Activated B cell treated with CpG ODN at 0.5 μM for 24 hours (primary cell): ENCODE measurements at regions of chr2 and their contacts with region 1.

Region 1: DNA sequence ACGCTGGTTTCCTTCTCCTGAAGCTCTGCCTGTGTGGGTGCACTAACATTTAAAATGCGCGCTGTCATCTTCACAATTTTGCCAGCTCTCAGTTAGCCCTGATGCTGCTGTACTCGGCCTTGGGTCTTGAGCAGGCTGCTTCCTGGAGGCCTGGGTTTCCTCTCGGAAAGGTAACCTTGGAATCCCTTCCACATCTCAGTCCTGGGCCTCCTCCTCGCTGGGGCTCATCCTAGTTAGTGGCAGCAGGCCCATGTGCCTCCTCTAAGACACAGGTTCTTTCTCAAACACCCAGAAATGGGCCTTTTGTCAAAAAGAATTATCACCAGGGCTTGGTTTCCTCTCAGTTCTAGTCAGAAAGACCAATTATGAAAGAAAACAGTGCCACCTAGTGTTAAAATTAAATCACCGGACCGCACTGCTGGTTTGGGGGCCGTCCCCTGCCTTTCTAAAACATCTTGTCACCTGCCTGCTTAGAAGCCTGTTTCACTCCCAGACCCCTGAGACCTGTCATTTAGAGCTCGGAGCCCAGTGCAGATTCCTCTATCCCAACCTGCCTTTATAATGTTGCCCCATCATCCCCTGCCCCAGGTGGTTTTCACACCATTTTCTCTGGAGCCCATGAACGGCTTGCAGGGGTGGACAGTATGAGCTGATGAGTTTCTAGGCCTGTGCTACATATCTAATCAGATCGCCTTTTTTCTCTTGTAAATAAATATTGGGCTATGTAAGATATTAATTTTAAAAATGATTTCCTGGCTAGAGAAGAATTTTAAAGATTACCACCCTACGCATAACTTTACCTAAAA is 42.4 kb downstream of the HK2 start:
- DNase-seq: peak; percentile 24
- ATAC-seq: peak; percentile 69
- H3K4me3 Mint-ChIP-seq: no peak overlapping the region
- H3K27ac Mint-ChIP-seq: no peak overlapping the region
- H3K4me1 Mint-ChIP-seq: no peaks in the 10 kb centered on the region
- H3K27me3 Mint-ChIP-seq: no peaks in the 10 kb centered on the region
- CTCF ChIP-seq: peak; percentile 41

Region 2: DNA sequence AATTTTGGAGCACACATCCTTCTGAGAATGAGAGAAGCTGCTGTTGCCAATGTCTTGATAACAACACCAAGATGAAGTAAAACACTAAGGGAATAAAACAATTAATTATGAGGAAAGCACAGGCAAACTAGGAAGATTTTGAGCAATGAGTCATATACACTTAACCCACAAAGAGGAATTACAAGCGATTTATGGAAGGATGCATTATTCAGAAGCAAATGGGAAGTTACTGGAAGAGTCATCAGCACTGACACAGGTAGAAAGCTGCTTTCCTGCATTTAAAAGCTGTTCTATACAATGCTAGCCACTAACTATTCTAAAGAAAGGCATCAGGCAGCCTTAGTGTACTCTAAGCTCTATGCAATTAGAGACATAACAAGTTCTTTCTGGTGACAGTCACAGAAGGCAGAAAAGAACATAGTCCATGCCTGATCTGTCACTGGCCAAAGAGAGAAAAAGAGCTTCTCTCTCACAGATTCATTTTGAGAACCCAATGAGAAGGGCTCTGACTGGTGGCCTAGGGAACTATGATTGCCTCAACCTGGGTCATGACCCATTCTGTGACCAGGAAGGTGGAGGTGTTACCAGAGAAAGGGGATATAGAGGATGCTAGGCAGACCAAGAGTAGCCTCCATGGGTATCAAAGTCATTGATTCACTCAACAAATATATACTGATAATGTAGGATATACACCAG is 273.6 kb before region 1 on chr2:
- CTCF ChIA-PET with region 1: no interaction called
- POLR2A ChIA-PET with region 1: interaction called, 5 read pairs
- intact Hi-C with region 1: loop called (anchors 5 kb)
- DNase-seq: no peak
- ATAC-seq: no peak
- H3K4me3 Mint-ChIP-seq: no peak overlapping the region
- H3K27ac Mint-ChIP-seq: no peak overlapping the region
- H3K4me1 Mint-ChIP-seq: peaks cover 5% of the 10 kb centered on the region
- H3K27me3 Mint-ChIP-seq: peaks cover 19% of the 10 kb centered on the region
- CTCF ChIP-seq: no peak

Region 3: DNA sequence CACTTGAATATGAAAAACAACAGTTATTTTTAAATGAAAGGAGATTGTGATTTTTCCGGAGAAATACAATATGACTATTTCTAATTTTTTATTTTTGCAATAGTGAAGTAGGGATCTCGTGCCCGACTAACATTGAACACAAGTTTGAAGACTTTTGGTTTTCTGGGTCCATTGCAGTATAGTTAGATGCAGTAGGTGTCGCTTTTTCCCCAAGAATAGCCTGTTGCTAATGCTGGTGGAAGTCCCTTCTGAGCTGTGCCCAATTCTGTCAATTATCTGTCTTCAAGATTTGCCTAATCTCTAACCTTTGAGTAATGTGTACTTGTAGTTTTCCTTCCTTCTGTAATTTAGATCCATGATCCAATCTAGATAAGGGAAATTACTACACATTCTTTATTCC is 185.7 kb before region 1 on chr2:
- CTCF ChIA-PET with region 1: interaction called, 34 read pairs
- POLR2A ChIA-PET with region 1: no interaction called
- intact Hi-C with region 1: loop called (anchors 1 kb)
- DNase-seq: no peak
- ATAC-seq: peak; percentile 50
- H3K4me3 Mint-ChIP-seq: no peak overlapping the region
- H3K27ac Mint-ChIP-seq: no peak overlapping the region
- H3K4me1 Mint-ChIP-seq: no peaks in the 10 kb centered on the region
- H3K27me3 Mint-ChIP-seq: peaks cover 6% of the 10 kb centered on the region
- CTCF ChIP-seq: peak; percentile 5

Region 4: DNA sequence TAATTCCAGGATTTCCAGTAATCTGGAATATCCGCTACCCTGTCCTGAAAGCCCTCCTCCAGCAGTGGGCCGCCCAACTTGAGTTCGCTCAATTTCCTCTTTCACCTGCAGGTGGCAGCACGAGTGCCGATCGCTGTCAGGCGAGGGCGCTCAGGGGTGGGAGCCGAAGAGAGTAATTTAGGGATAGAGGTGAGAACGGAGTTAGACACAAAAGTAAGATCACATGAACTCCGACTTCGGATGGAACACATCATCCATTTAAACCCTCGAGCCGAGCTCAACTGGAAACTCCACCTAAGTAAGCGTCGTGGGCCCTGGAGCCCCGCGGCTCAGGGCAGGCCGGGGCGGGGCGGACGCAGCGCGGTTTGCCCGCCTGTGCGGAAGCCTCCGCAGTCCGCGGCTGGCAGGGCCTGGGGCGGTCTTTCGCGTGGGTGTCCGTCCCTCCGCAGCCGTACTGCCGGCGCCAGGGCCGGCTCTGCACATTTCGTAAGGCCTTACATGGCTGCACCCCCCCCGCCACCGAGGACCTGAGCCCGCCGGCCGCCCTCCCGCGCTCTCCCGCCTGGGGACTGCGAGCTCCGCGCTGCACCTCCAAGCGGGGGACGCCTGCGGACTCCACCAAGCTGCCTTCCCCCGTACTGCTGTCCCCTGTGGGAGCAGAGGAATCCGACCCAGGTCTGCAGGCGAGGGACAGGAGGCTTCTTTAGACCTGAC is 161.0 kb before region 1 on chr2:
- CTCF ChIA-PET with region 1: interaction called, 158 read pairs
- POLR2A ChIA-PET with region 1: no interaction called
- intact Hi-C with region 1: loop called (anchors 1 kb)
- DNase-seq: peak; percentile 75
- ATAC-seq: peak; percentile 89
- H3K4me3 Mint-ChIP-seq: peak overlapping the region; percentile 87
- H3K27ac Mint-ChIP-seq: no peak overlapping the region
- H3K4me1 Mint-ChIP-seq: peaks cover 8% of the 10 kb centered on the region
- H3K27me3 Mint-ChIP-seq: peaks cover 12% of the 10 kb centered on the region
- CTCF ChIP-seq: no peak